ENCODE measurements at regions of chr7 and their contacts with region 1.

Region 1: GRCh38 chr7:20666444-20666843 is 51.0 kb downstream of the ABCB5 start:
- DNase-seq: peak in 1 of 2 experiments; percentile 30
- H3K4me3 ChIP-seq: no peak overlapping the region
- H3K4me3 Mint-ChIP-seq: peak overlapping the region; percentile 12
- H3K27ac Mint-ChIP-seq: peak overlapping the region; percentile 51
- H3K4me1 ChIP-seq: peaks cover 13% of the 10 kb centered on the region
- H3K4me1 Mint-ChIP-seq: peaks cover 18% of the 10 kb centered on the region
- H3K27me3 ChIP-seq: no peaks in the 10 kb centered on the region
- H3K27me3 Mint-ChIP-seq: no peaks in the 10 kb centered on the region
- CTCF ChIP-seq: no peak

Region 2: DNA sequence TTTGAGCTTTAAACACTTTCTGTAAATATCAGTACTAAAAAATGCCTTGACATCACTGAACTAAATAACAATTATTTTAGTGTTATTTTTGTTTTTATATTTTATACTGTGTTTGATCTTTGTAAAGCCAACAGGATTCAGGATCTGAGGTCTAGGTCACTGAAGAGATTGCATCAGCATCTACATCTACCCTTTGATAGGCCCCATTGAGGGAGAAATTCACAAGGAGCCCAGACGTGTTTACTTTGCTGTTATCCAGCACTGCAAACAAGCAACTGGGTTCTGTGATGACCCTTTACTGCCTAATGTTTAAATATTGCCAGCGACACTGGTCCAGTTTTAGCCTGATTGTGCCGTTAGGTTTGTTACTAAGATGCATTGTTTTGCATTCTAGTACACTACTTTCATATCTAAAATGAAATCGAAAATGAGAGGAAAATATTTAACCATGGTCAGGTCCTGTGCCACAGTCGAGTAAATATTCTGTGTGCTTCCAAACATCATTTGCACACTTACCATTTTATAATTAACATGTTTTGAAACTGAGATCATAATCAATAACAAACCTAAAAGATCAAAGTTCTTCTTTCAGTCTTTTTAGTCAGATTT is 71.5 kb after region 1 on chr7:
- CTCF ChIA-PET with region 1: no interaction called
- POLR2A ChIA-PET with region 1: no interaction called
- intact Hi-C with region 1: loop called (anchors 1 kb)
- DNase-seq: peak; percentile 63 to 78
- H3K4me3 ChIP-seq: no peak overlapping the region
- H3K4me3 Mint-ChIP-seq: peak overlapping the region; percentile 79
- H3K27ac Mint-ChIP-seq: peak overlapping the region; percentile 90
- H3K4me1 ChIP-seq: peaks cover 65% of the 10 kb centered on the region
- H3K4me1 Mint-ChIP-seq: peaks cover 53% of the 10 kb centered on the region
- H3K27me3 ChIP-seq: no peaks in the 10 kb centered on the region
- H3K27me3 Mint-ChIP-seq: no peaks in the 10 kb centered on the region
- CTCF ChIP-seq: no peak